ENCODE measurements at regions of chr10 and their contacts with region 1.

Region 1: DNA sequence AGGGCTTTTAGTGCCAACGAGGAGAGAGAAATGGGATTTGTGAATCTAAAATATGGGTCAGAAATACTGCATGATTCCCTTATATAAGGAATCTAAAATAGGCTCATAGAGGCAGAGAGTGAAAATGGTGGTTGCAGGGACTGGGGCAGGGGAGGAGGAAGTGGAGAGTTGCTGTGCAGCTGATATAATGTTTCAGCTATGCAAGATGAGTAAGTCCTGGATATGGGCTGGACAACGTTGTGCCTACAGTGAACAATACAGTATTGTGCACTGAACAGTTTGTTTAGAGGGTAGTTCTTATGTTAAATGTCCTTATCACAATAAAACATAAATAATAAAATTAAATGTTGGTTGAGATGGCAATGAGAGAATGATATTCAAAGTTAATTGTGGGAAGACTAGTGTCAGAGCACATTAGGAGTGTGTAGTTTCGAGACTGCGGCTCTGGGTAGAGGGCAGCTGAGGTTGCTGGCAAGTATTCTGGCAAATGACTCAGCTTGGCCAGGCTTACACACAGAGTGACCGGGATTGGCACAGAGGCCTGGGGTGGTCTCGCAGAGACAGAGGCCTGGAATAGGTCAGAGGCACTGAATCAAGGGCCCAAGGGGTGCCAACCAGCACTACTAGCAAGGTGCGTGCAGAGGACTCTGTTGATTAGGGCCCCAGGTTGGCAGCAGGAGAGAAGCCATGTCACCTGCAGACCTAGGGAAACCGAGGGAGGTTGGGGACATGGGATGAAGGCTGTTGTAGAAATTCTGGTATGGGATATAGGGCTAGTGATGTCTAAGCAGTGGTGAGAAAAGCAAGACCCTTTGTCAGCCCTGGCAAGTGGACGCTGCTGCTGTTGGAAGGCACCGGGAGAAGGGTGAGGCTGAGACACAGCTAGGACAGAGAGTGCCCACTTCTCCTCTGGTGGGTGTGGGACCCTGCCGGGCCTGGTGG is 2.8 kb upstream of the DEPP1 start:
- DNase-seq: peak in 4 of 5 donors; percentile 60 to 79 (median 71)
- ATAC-seq: peak; percentile 14 to 61 (median 45)
- H3K4me3 ChIP-seq: no peak overlapping the region
- H3K27ac ChIP-seq: peak overlapping the region; percentile 63 to 97 (median 87)
- H3K4me1 ChIP-seq: peaks cover 14 to 100% (median 89%) of the 10 kb centered on the region in 12 donors
- H3K27me3 ChIP-seq: no peaks in the 10 kb centered on the region
- CTCF ChIP-seq: no peak
- POLR2A ChIP-seq: no peak

Region 2: GRCh38 chr10:45000752-45001380 is 19.4 kb after region 1 on chr10 and contains the start of gene ZNF22:
- intact Hi-C with region 1: loop called in 3 of 10 experiments (anchors 1 to 2 kb)
- DNase-seq: peak; percentile 70 to 85 (median 82)
- ATAC-seq: peak; percentile 14 to 80 (median 63)
- H3K4me3 ChIP-seq: peak within 1 kb of the TSS; percentile 45 to 79 (median 66)
- H3K27ac ChIP-seq: peak within 1 kb of the TSS; percentile 93 to 99 (median 96)
- H3K4me1 ChIP-seq: peaks cover 8 to 73% (median 56%) of the 10 kb centered on the region in 12 donors
- H3K27me3 ChIP-seq: no peaks in the 10 kb centered on the region
- CTCF ChIP-seq: peak in 5 of 12 donors; percentile 10 to 40 (median 19)
- POLR2A ChIP-seq: peak in 1 of 2 donors; percentile 34
- total RNA-seq, gene ZNF22: 12.7 to 16.8 (median 14.6) TPM